AG04449 (cell line): ENCODE measurements at regions of chr11 and their contacts with region 1.

Region 1: DNA sequence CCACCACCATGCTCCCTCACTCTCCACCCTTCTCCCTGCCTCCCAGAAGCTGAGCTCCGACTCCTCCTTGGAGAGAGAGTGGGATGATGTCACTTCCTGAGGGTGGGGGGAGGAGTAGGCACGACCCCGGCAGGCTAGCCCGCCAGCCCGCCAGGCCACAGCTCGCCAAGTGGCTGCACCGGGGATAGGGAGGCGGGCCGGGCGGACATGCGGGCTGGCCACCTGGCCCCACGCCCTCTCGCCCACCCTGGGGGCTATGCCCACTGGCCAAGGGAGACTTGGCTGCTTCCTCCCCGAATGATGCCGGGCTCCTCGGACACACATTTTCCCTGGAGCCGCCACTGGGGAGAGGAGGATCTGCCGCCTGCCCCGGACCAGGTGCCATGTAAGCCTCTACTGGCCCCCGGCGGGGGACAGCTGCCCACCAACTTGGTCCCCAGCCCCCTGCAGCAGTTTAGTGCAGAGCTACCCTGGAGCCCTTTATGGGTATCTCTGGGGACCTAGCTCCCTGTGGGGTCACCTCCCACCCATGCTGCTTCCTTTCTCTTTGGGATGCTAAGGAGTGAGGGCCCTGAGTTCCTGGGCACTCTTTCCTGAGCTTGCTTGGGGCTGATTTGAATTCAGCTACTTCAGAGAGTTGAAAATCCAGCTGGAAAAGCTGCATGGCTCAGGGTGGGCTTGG is 33.7 kb upstream of the MYRF start:
- DNase-seq: no peak
- H3K4me3 ChIP-seq: peak overlapping the region; percentile 67
- CTCF ChIP-seq: no peak

Region 2: DNA sequence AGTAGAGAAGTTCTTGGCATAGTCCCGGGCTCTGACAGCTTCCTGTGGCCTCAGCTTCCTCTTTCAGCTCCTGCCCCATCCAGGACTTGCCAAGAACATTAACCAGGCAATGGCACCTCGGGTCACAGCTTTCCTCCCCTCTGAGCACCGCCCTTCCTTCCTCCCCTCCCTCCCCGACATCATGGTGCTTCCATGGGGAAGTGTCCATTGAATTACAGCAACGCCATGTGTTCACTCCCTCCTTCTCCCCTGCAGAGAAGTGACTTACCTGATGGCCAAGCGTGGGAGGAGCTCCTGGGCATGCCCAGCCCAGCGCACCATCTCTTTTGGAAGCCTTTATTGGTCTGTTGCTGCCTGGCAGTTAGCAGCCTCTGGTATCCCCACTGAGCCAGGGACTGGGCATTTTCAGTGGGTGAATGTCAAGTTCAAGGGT is 64.3 kb before region 1 on chr11:
- CTCF ChIA-PET with region 1: no interaction called
- POLR2A ChIA-PET with region 1: no interaction called
- DNase-seq: no peak
- H3K4me3 ChIP-seq: no peak overlapping the region
- CTCF ChIP-seq: no peak

Region 3: DNA sequence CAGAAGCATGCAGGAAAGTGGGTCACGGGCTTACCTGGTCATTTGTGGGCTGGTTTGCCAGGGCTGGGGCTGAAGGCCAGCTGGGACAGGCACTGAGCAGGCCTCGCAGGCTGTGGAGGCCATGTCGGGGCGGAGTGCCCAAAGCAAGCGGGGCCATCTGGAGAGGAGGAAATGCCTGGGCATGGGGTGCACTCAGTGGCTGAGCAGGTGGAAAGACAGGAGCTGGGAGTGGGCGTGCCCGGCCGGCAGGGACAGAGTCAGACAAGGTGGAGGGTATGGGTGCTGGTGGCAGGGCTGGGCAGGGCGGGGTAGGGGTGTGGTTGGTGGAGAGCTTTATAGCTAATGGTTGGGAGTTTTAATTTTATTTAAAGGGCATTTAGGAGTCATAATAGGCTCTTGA is 11.2 kb before region 1 on chr11:
- CTCF ChIA-PET with region 1: interaction called, 16 read pairs
- POLR2A ChIA-PET with region 1: no interaction called
- DNase-seq: no peak
- H3K4me3 ChIP-seq: no peak overlapping the region
- CTCF ChIP-seq: no peak